ENCODE measurements at regions of chr12 and their contacts with region 1.

Region 1: DNA sequence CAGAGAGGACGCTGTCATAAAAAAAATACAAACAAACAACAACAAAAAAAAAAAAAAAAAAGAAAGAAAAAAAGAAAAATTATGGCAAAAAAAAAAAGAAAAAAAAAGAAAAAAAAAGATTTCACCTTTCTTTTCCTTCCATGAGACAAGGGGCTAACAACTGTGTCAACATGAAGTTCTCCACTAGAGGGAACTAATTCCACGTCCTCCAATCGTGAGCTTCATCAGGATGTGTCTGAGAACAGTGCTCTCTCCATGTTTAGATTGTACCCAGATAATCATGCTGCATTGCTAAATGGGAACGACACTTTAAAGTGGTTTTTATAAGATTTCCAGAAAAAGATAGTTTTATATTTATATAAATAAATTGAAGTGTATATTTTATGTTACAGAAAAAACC is 96.2 kb upstream of the PTPRB start:
- DNase-seq: peak; percentile 71 to 79 (median 72)
- ATAC-seq: peak; percentile 95
- H3K4me3 ChIP-seq: no peak overlapping the region
- H3K27ac ChIP-seq: no peak overlapping the region
- H3K4me1 ChIP-seq: no peaks in the 10 kb centered on the region
- H3K27me3 ChIP-seq: no peaks in the 10 kb centered on the region
- CTCF ChIP-seq: peak; percentile 63 to 86 (median 68)
- EP300 ChIP-seq: 0 out of 2 replicates have a peak, but pooled peaks have one; percentile 17
- POLR2A ChIP-seq: no peak
- RAD21 ChIP-seq: peak; percentile 95

Region 2: DNA sequence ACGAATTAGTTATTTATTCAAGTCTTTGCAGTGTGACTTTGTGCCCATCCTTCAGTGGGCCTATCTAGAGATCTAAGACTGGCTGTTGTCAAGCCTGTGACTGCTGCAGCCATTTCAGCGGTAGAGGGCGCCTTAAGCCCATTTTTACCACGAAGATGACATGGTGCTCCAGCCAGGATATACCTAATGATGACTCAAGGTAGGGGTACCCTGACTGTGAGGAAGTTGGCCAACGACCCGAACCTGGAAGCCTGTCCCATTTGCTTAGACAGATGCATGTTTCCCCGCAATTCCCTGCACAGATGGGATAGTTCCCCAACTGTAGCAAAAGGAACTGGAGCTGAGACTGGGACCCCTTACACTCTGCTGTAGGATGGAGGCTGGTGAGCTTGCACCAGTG is 953.5 kb before region 1 on chr12:
- CTCF ChIA-PET with region 1: interaction called, 4 read pairs
- POLR2A ChIA-PET with region 1: no interaction called
- in situ Hi-C with region 1: no loop called
- intact Hi-C with region 1: loop called (anchors 5 kb)
- DNase-seq: peak; percentile 35 to 71 (median 52)
- ATAC-seq: peak; percentile 98
- H3K4me3 ChIP-seq: no peak overlapping the region
- H3K27ac ChIP-seq: no peak overlapping the region
- H3K4me1 ChIP-seq: no peaks in the 10 kb centered on the region
- H3K27me3 ChIP-seq: no peaks in the 10 kb centered on the region
- CTCF ChIP-seq: peak; percentile 59 to 77 (median 72)
- EP300 ChIP-seq: no peak
- POLR2A ChIP-seq: no peak
- RAD21 ChIP-seq: peak; percentile 30 to 74; a peak in 3 of 4 replicates

Region 3: GRCh38 chr12:70430400-70430799 is 303.0 kb before region 1 on chr12:
- CTCF ChIA-PET with region 1: no interaction called
- POLR2A ChIA-PET with region 1: no interaction called
- in situ Hi-C with region 1: no loop called
- intact Hi-C with region 1: no loop called
- DNase-seq: no peak
- ATAC-seq: no peak
- H3K4me3 ChIP-seq: no peak overlapping the region
- H3K27ac ChIP-seq: no peak overlapping the region
- H3K4me1 ChIP-seq: no peaks in the 10 kb centered on the region
- H3K27me3 ChIP-seq: peaks cover 5 to 15% of the 10 kb centered on the region in 2 experiments
- CTCF ChIP-seq: no peak
- EP300 ChIP-seq: no peak
- POLR2A ChIP-seq: no peak
- RAD21 ChIP-seq: no peak

Region 4: DNA sequence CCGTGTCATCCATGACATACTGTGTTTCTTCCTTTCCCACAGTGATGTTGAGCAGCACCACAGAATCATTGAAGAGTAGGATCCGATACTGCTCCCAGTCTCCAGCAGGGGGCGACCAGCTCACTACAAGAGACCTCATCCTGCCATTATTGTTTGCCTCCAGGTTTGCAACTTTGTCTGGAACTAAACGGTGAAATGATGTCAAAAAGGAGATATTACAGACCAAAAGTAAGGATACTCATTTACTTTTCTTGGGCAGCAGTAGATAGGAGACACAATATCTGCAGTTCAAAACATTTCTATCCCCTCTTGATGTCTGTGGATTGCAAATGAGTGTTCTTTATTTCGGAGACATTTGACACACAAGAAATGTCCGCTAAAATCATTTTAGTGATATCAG is 143.3 kb before region 1 on chr12:
- CTCF ChIA-PET with region 1: interaction called, 11 read pairs
- POLR2A ChIA-PET with region 1: no interaction called
- in situ Hi-C with region 1: loop called (anchors 5 kb)
- intact Hi-C with region 1: no loop called
- DNase-seq: peak; percentile 69 to 86 (median 70)
- ATAC-seq: peak; percentile 98
- H3K4me3 ChIP-seq: no peak overlapping the region
- H3K27ac ChIP-seq: no peak overlapping the region
- H3K4me1 ChIP-seq: peaks cover 0 to 3% of the 10 kb centered on the region in 2 experiments; a peak in 1 of 5 replicates
- H3K27me3 ChIP-seq: no peaks in the 10 kb centered on the region
- CTCF ChIP-seq: peak; percentile 81 to 90 (median 85)
- EP300 ChIP-seq: no peak
- POLR2A ChIP-seq: no peak
- RAD21 ChIP-seq: peak; percentile 92 to 96

Region 5: GRCh38 chr12:70785896-70786295 is 52.5 kb after region 1 on chr12:
- CTCF ChIA-PET with region 1: no interaction called
- POLR2A ChIA-PET with region 1: no interaction called
- in situ Hi-C with region 1: no loop called
- intact Hi-C with region 1: no loop called
- DNase-seq: no peak
- ATAC-seq: no peak
- H3K4me3 ChIP-seq: no peak overlapping the region
- H3K27ac ChIP-seq: no peak overlapping the region
- H3K4me1 ChIP-seq: peaks cover 0 to 7% of the 10 kb centered on the region in 2 experiments; a peak in 1 of 5 replicates
- H3K27me3 ChIP-seq: peaks cover 0 to 5% of the 10 kb centered on the region in 2 experiments; a peak in 1 of 5 replicates
- CTCF ChIP-seq: no peak
- EP300 ChIP-seq: no peak
- POLR2A ChIP-seq: no peak
- RAD21 ChIP-seq: no peak

Region 6: DNA sequence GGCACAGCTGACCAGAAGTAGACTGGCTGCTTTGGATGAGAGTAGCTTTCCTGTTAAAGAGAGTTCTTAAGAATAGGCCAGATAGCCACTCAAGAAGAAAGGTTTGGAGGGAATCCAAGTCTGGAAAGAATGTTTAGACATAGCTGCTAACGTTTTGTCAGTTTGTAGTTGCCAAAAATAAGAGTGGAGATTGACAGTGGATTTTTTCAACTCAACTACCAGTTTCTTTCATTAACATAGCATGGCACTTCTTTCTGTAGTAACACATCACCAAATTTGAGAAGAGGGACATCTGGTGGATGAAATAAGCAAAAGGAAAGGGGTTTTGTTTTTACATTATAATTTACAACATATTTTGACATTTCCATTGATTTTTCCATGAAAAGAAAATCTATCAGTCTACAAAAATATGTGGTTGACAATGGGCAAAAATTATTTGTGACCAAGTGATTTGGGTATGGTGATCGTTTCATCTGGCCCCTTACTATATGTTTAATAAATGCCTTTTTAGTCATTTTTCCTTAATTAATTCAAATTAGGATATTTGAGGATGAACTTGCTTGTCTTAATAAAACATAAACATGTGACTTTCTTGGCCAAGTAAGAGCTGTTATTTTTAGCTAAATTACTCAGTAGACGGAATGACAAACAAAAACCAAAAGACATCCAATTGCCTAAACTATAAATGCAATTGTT is 116.0 kb after region 1 on chr12:
- CTCF ChIA-PET with region 1: interaction called, 27 read pairs
- POLR2A ChIA-PET with region 1: no interaction called
- in situ Hi-C with region 1: loop called (anchors 5 kb)
- intact Hi-C with region 1: loop called (anchors 1 kb)
- DNase-seq: peak in 3 of 4 experiments; percentile 8 to 25 (median 24)
- ATAC-seq: peak; percentile 49; the same call in 1 of the 3 replicates
- H3K4me3 ChIP-seq: no peak overlapping the region
- H3K27ac ChIP-seq: no peak overlapping the region
- H3K4me1 ChIP-seq: no peaks in the 10 kb centered on the region
- H3K27me3 ChIP-seq: peaks cover 0 to 3% of the 10 kb centered on the region in 2 experiments; a peak in 1 of 5 replicates
- CTCF ChIP-seq: peak; percentile 23 to 65 (median 42); a peak in 4 of 6 replicates
- EP300 ChIP-seq: no peak
- POLR2A ChIP-seq: no peak
- RAD21 ChIP-seq: peak; percentile 72 to 85

Region 7: GRCh38 chr12:71551529-71551928 is 818.1 kb after region 1 on chr12:
- CTCF ChIA-PET with region 1: no interaction called
- POLR2A ChIA-PET with region 1: no interaction called
- in situ Hi-C with region 1: no loop called
- intact Hi-C with region 1: loop called (anchors 10 kb)
- DNase-seq: peak in 2 of 4 experiments; percentile 13 to 28
- ATAC-seq: peak; percentile 73
- H3K4me3 ChIP-seq: no peak overlapping the region
- H3K27ac ChIP-seq: no peak overlapping the region
- H3K4me1 ChIP-seq: no peaks in the 10 kb centered on the region
- H3K27me3 ChIP-seq: no peaks in the 10 kb centered on the region
- CTCF ChIP-seq: peak; percentile 48 to 79 (median 60); a peak in 4 of 6 replicates
- EP300 ChIP-seq: no peak
- POLR2A ChIP-seq: no peak
- RAD21 ChIP-seq: peak; percentile 67 to 83